SK-N-SH (cell line): ENCODE measurements at regions of chr5 and their contacts with region 1.

Region 1: DNA sequence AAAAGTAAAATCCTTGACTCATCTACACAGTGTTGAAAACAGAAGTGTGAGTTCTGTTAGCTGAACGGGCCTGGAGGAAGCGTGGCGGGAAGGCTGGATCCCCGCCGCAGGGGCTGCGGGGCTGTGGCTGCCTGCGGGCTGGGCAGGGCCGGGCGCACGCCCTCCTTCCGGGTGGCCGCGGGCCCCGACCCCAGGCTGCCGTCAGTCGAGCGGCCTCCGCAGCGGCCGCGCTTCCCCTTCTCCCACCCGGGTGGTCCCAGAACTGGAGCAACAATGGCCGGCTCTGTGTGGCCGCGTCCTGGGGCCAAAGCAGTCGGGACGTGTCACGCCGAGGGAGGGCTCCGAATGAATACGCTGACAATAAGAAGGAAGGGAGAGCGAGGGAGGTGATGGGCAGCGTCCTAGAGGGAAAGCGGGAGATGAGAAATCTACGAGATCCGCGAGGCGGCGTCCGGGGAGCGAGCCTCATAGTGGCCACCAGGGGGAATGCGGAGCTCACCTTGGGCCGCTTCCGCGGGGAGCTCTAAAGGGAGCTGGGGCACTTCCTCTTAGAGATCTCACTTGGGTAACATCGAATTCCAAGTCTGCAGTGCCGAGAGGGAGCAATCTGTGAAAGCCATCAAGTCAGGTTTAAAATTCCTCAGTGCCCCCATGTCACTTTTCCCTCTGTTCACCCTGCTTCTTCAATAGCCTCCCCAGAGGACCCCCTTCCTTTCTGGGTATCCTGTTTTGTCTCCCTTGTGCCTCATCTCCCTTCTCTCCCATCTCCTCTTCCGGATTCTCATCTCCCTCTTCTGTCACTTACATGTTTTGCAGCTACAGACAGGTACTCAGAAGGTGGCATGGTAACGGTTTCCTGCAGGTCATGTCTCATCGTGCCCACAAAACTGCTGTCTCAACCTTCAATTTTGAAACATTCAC is 83.9 kb downstream of the SLC1A3 start:
- DNase-seq: peak; percentile 91
- H3K4me3 ChIP-seq: peak overlapping the region; percentile 56 to 67
- H3K27ac ChIP-seq: no peak overlapping the region
- H3K4me1 ChIP-seq: peaks cover 0 to 3% of the 10 kb centered on the region in 2 experiments; a peak in 1 of 4 replicates
- H3K27me3 ChIP-seq: peaks cover 7% of the 10 kb centered on the region; the same call in 1 of the 2 replicates
- CTCF ChIP-seq: peak; percentile 72
- EP300 ChIP-seq: no peak
- RAD21 ChIP-seq: peak; percentile 48

Region 2: DNA sequence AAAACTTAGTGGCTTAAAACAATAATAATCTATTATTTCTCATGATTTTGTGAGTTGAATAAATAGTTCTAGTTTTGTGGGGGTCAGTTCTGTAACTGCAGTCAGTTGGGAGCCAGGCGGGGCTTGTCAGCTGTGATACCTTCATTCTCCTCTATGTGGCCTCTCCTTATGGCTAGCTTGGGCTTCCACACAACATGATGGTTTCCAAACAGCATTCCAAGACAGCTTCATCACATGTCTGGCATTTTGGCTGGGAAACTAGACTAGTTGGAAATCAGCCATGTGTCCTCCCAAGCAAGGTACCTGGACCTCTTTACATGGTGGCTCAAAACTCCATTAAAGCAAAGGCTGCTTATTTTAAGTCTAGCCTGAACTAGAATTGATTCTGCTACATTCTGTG is 327.2 kb before region 1 on chr5:
- CTCF ChIA-PET with region 1: no interaction called
- POLR2A ChIA-PET with region 1: no interaction called
- DNase-seq: no peak
- H3K4me3 ChIP-seq: no peak overlapping the region
- H3K27ac ChIP-seq: no peak overlapping the region
- H3K4me1 ChIP-seq: no peaks in the 10 kb centered on the region
- H3K27me3 ChIP-seq: no peaks in the 10 kb centered on the region
- CTCF ChIP-seq: no peak
- EP300 ChIP-seq: no peak
- RAD21 ChIP-seq: no peak

Region 3: DNA sequence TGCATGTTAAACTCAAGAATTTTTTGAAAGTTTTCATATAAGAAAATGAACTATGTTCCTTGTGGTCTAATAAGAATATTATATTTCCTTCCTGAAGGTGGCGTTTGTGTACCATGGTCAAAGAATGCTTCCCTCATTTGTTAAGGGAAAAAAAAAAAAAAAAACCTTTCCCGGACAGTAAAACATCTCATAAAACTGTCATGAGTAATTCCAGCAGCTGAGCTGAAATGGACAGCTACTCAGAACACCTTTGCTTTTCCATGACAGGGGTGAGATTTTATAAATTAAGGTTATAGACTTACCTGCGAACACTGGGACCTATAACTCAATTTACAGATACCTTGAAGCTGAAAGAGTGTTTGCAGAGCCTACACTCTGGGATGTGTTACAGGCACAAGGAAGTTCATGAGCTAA is 275.4 kb before region 1 on chr5:
- CTCF ChIA-PET with region 1: interaction called, 123 read pairs
- POLR2A ChIA-PET with region 1: no interaction called
- DNase-seq: peak; percentile 26
- H3K4me3 ChIP-seq: no peak overlapping the region; a peak in 1 of 4 replicates
- H3K27ac ChIP-seq: no peak overlapping the region
- H3K4me1 ChIP-seq: no peaks in the 10 kb centered on the region
- H3K27me3 ChIP-seq: peaks cover 38% of the 10 kb centered on the region; the same call in 1 of the 2 replicates
- CTCF ChIP-seq: peak; percentile 71
- EP300 ChIP-seq: no peak
- RAD21 ChIP-seq: peak; percentile 72

Region 4: GRCh38 chr5:36854402-36855140 is 164.3 kb after region 1 on chr5:
- CTCF ChIA-PET with region 1: no interaction called
- POLR2A ChIA-PET with region 1: no interaction called
- DNase-seq: peak; percentile 4
- H3K4me3 ChIP-seq: no peak overlapping the region
- H3K27ac ChIP-seq: no peak overlapping the region
- H3K4me1 ChIP-seq: no peaks in the 10 kb centered on the region
- H3K27me3 ChIP-seq: no peaks in the 10 kb centered on the region; the same call in 1 of the 2 replicates
- CTCF ChIP-seq: no peak
- EP300 ChIP-seq: no peak
- RAD21 ChIP-seq: no peak